T-cell (primary cell): ENCODE measurements at regions of chr15 and their contacts with region 1.

Region 1: DNA sequence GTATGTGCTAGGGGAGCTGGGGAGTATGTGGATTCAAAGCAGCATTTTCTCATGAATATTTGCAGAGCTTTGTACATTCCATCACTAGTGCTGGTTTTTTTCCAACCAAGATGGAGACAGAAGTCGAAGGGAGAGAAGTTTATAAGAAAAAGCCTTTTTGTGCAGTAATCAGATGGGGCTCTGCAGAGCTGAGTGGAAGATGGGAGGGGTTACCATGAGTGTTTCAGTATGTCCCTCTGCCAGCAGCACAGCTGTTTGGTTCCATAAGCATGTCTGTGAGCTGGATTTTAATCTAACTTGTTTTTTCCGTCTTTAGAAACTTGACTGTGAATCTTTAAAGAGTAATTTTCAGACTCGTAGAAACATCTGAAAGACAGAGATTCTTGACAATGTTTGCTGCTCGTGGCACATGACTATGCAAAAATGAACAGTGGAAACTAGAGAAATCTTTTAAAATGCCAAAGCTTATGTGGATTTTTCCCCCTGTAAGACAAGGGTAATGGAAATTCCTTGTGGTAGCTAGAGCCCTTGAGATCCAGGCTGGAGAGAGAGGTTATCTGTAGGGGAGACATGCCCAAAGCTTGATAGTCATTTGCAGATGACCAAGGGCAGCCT is 20.3 kb downstream of the STARD9 start:
- DNase-seq: no peak
- ATAC-seq: no peak
- H3K4me3 ChIP-seq: no peak overlapping the region
- H3K4me3 Mint-ChIP-seq: no peak overlapping the region
- H3K27ac ChIP-seq: no peak overlapping the region
- H3K27ac Mint-ChIP-seq: no peak overlapping the region
- H3K4me1 ChIP-seq: no peaks in the 10 kb centered on the region
- H3K4me1 Mint-ChIP-seq: no peaks in the 10 kb centered on the region
- H3K27me3 ChIP-seq: no peaks in the 10 kb centered on the region
- H3K27me3 Mint-ChIP-seq: no peaks in the 10 kb centered on the region

Region 2: DNA sequence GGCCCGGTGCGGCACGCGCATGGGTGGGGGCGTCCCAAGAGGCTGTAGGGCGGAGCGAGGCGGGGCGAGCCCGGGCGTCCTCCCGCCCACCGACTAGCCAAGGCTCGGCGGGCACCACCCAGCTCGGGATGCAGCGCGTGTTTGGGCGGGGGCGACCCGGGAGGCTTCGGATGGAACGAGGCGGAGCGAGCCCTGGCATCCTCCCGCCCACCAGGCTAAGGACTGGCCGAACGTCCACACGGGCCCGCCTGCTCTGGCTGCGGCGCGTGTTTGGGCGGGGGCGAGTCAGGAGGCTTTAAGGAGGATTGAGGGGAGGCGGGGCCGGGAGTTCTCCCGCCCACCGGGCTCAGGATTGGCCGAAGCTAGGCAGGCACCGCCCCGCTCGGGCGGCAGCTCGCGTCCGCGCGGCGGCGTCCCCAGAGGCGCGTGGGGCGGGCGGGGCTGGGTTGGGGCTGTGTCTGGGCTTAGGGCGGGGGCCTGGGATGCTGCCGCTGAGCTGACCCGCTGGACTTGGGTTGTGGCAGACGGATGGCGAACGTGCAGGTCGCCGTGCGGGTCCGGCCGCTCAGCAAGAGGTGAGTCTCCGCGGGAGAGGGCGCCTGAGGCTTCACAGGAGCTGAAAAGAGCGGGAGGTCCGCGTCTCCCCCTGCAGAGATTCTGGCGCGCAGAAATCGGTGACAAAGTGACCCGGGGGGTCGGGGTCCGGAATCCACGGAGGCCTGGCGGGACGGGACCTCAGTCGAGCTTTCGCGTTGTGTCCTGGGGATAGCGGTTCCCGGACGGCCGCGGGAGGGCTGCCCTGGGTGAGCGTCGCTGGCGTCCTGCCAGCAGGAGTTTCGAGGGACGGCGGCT is 20.3 kb before region 1 on chr15 and contains the start of gene STARD9:
- CTCF ChIA-PET with region 1: interaction called in 1 of 2 experiments, 7 read pairs
- POLR2A ChIA-PET with region 1: interaction called in 1 of 2 experiments, 10 read pairs
- DNase-seq: peak; percentile 82 to 95 (median 90)
- ATAC-seq: peak; percentile 91 to 97 (median 94)
- H3K4me3 ChIP-seq: peak within 1 kb of the TSS; percentile 78 to 80
- H3K4me3 Mint-ChIP-seq: peak within 1 kb of the TSS; percentile 88 to 92 (median 91)
- H3K27ac ChIP-seq: peak within 1 kb of the TSS; percentile 47
- H3K27ac Mint-ChIP-seq: peak within 1 kb of the TSS; percentile 71 to 84
- H3K4me1 ChIP-seq: peaks cover 2 to 18% of the 10 kb centered on the region in 2 experiments
- H3K4me1 Mint-ChIP-seq: peaks cover 10 to 22% (median 16%) of the 10 kb centered on the region in 3 donors
- H3K27me3 ChIP-seq: peaks cover 0 to 2% of the 10 kb centered on the region in 2 experiments
- H3K27me3 Mint-ChIP-seq: peaks cover 14% of the 10 kb centered on the region in 2 donors
- total RNA-seq, gene STARD9: 6.6 to 10.6 (median 8.8) TPM

Region 3: DNA sequence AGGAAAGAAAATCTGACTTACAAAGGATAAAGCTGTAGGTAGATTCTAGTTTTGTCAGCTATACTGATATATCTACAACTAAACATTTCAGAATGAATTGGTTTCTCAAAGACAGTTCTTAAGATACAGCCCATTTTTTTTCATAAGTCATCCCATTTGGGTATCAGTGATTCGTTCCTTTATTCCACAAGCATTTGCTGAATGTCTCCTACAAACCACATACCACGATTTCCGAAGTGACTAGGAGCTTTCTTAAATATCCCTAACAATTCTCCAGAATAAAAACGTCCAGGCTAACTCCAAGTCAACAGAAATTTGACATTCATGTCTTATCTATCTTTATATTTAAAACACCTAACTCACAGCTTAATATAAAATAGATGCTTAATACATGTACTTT is 837.4 kb after region 1 on chr15:
- CTCF ChIA-PET with region 1: interaction called in 1 of 2 experiments, 10 read pairs
- POLR2A ChIA-PET with region 1: no interaction called
- DNase-seq: no peak
- ATAC-seq: no peak
- H3K4me3 ChIP-seq: no peak overlapping the region
- H3K4me3 Mint-ChIP-seq: no peak overlapping the region
- H3K27ac ChIP-seq: no peak overlapping the region
- H3K27ac Mint-ChIP-seq: no peak overlapping the region
- H3K4me1 ChIP-seq: no peaks in the 10 kb centered on the region
- H3K4me1 Mint-ChIP-seq: no peaks in the 10 kb centered on the region
- H3K27me3 ChIP-seq: no peaks in the 10 kb centered on the region
- H3K27me3 Mint-ChIP-seq: no peaks in the 10 kb centered on the region